Gastrocnemius medialis (tissue), 4 donors: ENCODE measurements at regions of chr13 and their contacts with region 1.

Region 1: DNA sequence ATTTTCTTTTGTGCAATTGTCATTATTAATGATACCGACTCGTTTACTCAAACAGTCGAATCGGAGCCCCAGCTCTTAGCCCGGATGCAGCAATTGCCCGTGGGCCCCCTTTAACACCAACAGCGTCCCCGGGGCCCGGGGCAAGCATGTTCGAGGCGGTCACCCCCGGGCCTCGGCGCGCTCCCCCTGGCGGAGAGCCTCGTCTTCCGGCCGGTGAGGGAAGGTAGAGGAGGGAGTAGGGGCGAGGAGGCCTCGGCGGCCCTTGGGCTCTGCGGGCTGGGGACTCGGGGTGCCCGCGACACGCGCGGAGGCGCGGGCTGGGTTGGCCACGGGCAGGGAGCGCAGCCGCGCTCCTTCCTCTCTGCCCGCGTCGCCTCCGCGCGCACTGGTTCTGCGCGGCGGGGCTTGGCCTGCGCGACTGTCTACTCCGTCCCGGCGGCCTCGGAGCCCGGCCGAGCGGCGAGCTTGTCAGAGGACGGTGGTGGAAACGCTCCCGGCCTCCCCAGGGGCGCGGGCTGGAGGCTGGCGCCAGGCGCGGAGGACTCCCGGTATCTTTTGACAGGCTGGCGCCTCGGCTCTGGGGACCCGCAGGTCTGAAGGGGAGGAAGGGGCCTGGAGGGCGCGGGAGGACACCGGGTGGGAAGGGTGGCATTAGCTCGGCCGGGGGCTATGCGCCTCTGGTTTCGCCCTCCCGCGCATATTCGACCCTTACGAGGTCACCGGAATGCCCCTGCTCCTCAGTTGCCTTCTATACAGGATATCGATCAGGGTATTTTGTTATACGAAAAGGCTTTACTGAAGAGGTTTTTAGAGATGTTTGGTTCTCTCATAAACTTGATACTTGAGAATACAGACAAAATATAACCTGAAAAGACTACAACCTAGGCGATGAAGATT is 1.5 kb downstream of the BIVM start:
- DNase-seq: peak; percentile 57 to 77
- ATAC-seq: peak; percentile 75 to 83
- H3K4me3 ChIP-seq: peak overlapping the region; percentile 68 to 87 (median 78)
- H3K27ac ChIP-seq: peak overlapping the region; percentile 75 to 91 (median 89)
- H3K4me1 ChIP-seq: peaks cover 25 to 29% of the 10 kb centered on the region in 2 donors
- H3K27me3 ChIP-seq: no peaks in the 10 kb centered on the region
- CTCF ChIP-seq: peak; percentile 63 to 82 (median 76)
- POLR2A ChIP-seq: no peak

Region 2: DNA sequence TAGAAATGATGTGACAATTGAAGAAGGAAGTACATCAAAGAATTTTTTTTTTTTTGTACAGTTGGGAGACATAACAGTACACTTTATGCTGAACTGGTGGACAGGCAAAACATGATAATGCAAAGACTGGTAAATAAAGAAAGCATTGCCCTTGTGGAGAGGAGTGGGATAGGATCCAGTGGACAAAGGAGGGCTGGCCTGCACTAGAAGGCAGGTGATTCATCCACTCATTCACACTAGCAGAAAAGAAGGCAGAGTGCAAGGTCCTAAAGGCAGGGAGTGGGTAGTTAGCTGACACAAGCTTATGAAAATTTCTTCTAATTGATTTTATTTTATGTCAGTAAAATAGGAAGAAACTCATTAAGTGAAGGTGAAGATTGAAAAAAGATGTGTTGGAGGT is 1366.5 kb before region 1 on chr13:
- in situ Hi-C with region 1: no loop called
- intact Hi-C with region 1: no loop called
- DNase-seq: no peak
- ATAC-seq: no peak
- H3K4me3 ChIP-seq: no peak overlapping the region
- H3K27ac ChIP-seq: no peak overlapping the region
- H3K4me1 ChIP-seq: no peaks in the 10 kb centered on the region
- H3K27me3 ChIP-seq: no peaks in the 10 kb centered on the region
- CTCF ChIP-seq: no peak
- POLR2A ChIP-seq: no peak

Region 3: GRCh38 chr13:102580552-102581169 is 219.7 kb before region 1 on chr13:
- in situ Hi-C with region 1: no loop called
- intact Hi-C with region 1: loop called (anchors 1 kb)
- DNase-seq: no peak
- ATAC-seq: peak; percentile 43 to 65
- H3K4me3 ChIP-seq: no peak overlapping the region
- H3K27ac ChIP-seq: no peak overlapping the region
- H3K4me1 ChIP-seq: peaks cover 8 to 11% of the 10 kb centered on the region in 2 donors
- H3K27me3 ChIP-seq: no peaks in the 10 kb centered on the region
- CTCF ChIP-seq: peak; percentile 55 to 82 (median 65)
- POLR2A ChIP-seq: no peak

Region 4: GRCh38 chr13:102596147-102597028 is 204.0 kb before region 1 on chr13 and contains the start of gene TPP2:
- in situ Hi-C with region 1: no loop called
- intact Hi-C with region 1: loop called (anchors 1 kb)
- DNase-seq: peak; percentile 99
- ATAC-seq: peak; percentile 88 to 89
- H3K4me3 ChIP-seq: peak within 1 kb of the TSS; percentile 63 to 99 (median 86)
- H3K27ac ChIP-seq: peak within 1 kb of the TSS; percentile 93 to 100 (median 96)
- H3K4me1 ChIP-seq: peaks cover 42 to 48% of the 10 kb centered on the region in 2 donors
- H3K27me3 ChIP-seq: no peaks in the 10 kb centered on the region
- CTCF ChIP-seq: peak in 1 of 5 experiments; percentile 8
- POLR2A ChIP-seq: peak; percentile 92
- total RNA-seq, gene TPP2: 38.2 to 78.2 (median 68.1) TPM

Region 5: DNA sequence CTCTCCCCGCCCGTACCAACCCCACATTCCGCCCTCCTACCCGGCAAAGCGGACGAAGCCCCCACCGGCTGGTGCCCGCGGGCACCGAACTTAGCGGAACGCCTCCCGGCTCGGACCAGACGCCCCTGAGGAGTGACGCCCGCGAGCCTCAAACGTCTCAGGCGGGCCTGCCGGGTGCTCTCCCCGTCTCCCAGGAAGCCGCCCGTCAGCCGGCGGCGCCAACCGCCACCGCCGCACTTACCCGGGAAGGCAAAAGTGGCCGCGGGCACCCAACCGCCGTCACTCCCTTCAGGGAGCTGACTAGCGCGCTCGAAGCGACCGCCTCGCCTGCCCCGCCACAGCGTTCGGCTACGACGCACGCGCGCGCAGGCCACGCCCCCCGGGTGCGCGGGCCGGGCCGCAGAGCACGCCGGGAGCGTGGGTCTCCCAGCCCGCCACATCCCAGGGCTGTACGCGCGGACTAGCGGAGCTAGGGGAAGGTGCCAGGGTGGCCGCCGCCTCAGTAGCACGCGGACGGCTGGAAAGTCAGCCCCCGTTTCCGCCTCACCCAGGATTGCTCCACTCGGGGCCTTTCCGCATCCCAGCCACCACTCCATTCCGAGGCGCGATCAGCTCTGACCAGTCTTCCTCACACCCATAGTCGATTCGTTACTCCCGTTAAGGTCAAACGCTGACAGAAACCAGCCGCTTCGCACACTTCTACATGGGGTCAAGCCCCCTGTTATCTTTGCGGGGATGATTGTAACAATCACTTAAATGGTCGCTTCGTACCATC is 26.8 kb before region 1 on chr13 and contains the start of gene TEX30:
- in situ Hi-C with region 1: no loop called
- intact Hi-C with region 1: loop called (anchors 1 kb)
- DNase-seq: peak; percentile 50 to 73
- ATAC-seq: peak; percentile 96
- H3K4me3 ChIP-seq: peak within 1 kb of the TSS; percentile 72 to 91 (median 74)
- H3K27ac ChIP-seq: peak within 1 kb of the TSS; percentile 80 to 85 (median 80)
- H3K4me1 ChIP-seq: peaks cover 7 to 9% of the 10 kb centered on the region in 2 donors
- H3K27me3 ChIP-seq: no peaks in the 10 kb centered on the region
- CTCF ChIP-seq: no peak
- POLR2A ChIP-seq: peak; percentile 81 to 86
- total RNA-seq, gene TEX30: 3.5 to 11.6 (median 10.2) TPM